ENCODE measurements at regions of chr11 and their contacts with region 1.

Region 1: GRCh38 chr11:10208131-10208575 is 85.9 kb downstream of the SBF2 start:
- DNase-seq: peak; percentile 72
- H3K4me3 ChIP-seq: no peak overlapping the region
- H3K27ac ChIP-seq: no peak overlapping the region
- H3K4me1 ChIP-seq: no peaks in the 10 kb centered on the region
- CTCF ChIP-seq: peak; percentile 95

Region 2: DNA sequence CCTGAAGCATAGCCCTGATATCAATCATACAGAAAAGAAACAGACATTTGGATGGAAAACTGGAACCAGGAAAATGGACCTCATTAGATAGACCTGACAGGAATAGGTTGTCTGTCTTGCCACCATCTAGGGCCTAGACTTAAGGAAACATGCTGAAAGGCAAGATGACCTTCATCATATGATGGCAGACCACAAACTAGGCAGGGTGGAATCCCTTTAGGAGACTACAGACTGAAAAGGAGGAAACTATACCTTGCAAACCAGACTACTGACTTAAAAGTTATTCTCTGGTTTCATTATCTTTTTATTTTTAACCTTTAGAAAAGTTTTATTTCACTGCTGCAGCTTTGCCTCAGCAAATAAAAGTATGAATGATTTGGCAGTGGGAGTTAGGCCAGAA is 65.6 kb after region 1 on chr11:
- CTCF ChIA-PET with region 1: no interaction called
- POLR2A ChIA-PET with region 1: interaction called, 12 read pairs
- intact Hi-C with region 1: no loop called
- DNase-seq: no peak
- H3K4me3 ChIP-seq: no peak overlapping the region
- H3K27ac ChIP-seq: no peak overlapping the region
- H3K4me1 ChIP-seq: peaks cover 6% of the 10 kb centered on the region
- CTCF ChIP-seq: no peak

Region 3: DNA sequence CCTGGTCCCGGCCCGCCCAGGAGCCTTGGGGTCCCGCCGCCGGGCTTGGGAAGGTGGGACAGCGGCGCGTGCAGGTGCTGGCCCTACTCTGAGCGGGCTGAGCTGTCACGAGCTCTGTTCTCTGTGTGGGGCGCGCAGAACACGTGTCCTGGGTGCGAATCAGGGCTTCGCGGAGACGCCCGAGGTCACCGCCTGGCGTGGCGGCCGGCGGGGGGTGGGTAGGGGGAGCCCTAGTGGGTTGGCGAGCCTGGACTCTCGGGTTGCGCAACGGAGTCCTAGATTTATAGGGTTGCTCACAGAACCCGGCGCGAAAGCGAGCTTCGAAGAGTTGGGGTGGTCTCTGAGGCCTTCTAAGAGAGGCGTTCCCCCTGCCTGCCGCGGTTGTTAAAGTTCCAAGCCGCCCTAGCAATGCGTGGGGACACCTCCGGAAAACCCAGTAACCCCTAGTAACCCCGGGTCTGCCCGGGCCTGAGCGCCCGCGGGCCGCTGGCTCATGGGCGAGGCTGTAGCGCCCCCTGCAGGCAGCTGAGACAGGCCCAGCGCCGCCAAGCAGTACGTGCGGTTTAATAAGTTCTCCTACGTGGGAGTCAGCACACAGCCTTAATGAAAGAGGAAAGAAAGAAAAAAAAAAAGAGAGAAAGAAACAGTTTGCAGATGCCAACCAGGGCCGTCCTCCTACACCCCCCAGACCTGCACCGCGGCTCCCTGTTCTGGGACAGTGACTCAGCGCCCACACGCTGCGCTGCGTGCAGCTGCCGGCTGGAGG is 99.5 kb after region 1 on chr11:
- CTCF ChIA-PET with region 1: interaction called, 4 read pairs
- POLR2A ChIA-PET with region 1: interaction called, 3 read pairs
- intact Hi-C with region 1: loop called (anchors 1 kb)
- DNase-seq: peak; percentile 83
- H3K4me3 ChIP-seq: peak overlapping the region; percentile 62
- H3K27ac ChIP-seq: peak overlapping the region; percentile 93
- H3K4me1 ChIP-seq: peaks cover 97% of the 10 kb centered on the region
- CTCF ChIP-seq: peak; percentile 99

Region 4: GRCh38 chr11:10322830-10323792 is 115.0 kb after region 1 on chr11:
- CTCF ChIA-PET with region 1: interaction called, 3 read pairs
- POLR2A ChIA-PET with region 1: interaction called, 3 read pairs
- intact Hi-C with region 1: loop called (anchors 1 kb)
- DNase-seq: peak; percentile 76
- H3K4me3 ChIP-seq: peak overlapping the region; percentile 8
- H3K27ac ChIP-seq: peak overlapping the region; percentile 5
- H3K4me1 ChIP-seq: peaks cover 40% of the 10 kb centered on the region
- CTCF ChIP-seq: peak; percentile 87

Region 5: GRCh38 chr11:10366568-10367370 is 158.6 kb after region 1 on chr11:
- CTCF ChIA-PET with region 1: no interaction called
- POLR2A ChIA-PET with region 1: interaction called, 3 read pairs
- intact Hi-C with region 1: loop called (anchors 1 kb)
- DNase-seq: peak; percentile 83
- H3K4me3 ChIP-seq: no peak overlapping the region
- H3K27ac ChIP-seq: no peak overlapping the region
- H3K4me1 ChIP-seq: peaks cover 9% of the 10 kb centered on the region
- CTCF ChIP-seq: peak; percentile 91

Region 6: GRCh38 chr11:11069841-11070835 is 862.0 kb after region 1 on chr11:
- CTCF ChIA-PET with region 1: no interaction called
- POLR2A ChIA-PET with region 1: no interaction called
- intact Hi-C with region 1: no loop called
- DNase-seq: no peak
- H3K4me3 ChIP-seq: no peak overlapping the region
- H3K27ac ChIP-seq: no peak overlapping the region
- H3K4me1 ChIP-seq: no peaks in the 10 kb centered on the region
- CTCF ChIP-seq: no peak

Measured in OCI-LY7 (cell line).